ENCODE measurements at regions of chr6 and their contacts with region 1.

Region 1: GRCh38 chr6:113970805-113971676 is at the start of gene HDAC2:
- DNase-seq: peak; percentile 61 to 92 (median 84)
- ATAC-seq: peak; percentile 77
- H3K4me3 ChIP-seq: peak within 1 kb of the TSS; percentile 72 to 99
- H3K4me3 Mint-ChIP-seq: peak within 1 kb of the TSS; percentile 95
- H3K27ac ChIP-seq: peak within 1 kb of the TSS; percentile 78 to 93
- H3K27ac Mint-ChIP-seq: peak within 1 kb of the TSS; percentile 97
- H3K4me1 ChIP-seq: peaks cover 30% of the 10 kb centered on the region
- H3K4me1 Mint-ChIP-seq: peaks cover 42% of the 10 kb centered on the region
- H3K27me3 ChIP-seq: no peaks in the 10 kb centered on the region
- H3K27me3 Mint-ChIP-seq: no peaks in the 10 kb centered on the region
- CTCF ChIP-seq: no peak
- total RNA-seq, gene HDAC2: 34.6 to 35.0 TPM

Region 2: DNA sequence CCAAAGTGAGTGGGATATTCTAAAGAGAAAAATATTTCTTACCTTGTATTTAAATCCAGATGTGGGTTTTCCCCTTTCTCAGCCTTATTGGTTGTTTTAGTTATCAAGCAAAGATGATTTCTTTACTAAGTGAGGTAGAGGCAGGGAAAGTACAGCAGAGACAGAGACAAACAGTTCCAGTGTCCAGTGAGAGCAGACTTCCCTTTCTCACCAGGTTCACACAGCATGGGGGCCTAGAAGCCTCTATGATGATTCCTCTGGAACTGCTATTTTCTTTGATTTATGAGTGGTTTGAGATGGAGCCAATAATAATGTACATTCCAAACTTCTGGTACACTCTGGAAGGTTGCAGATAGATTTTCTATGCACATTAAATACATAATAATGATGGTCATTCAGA is 347.9 kb before region 1 on chr6:
- CTCF ChIA-PET with region 1: no interaction called
- POLR2A ChIA-PET with region 1: no interaction called
- intact Hi-C with region 1: no loop called
- DNase-seq: no peak
- ATAC-seq: no peak
- H3K4me3 ChIP-seq: no peak overlapping the region
- H3K4me3 Mint-ChIP-seq: no peak overlapping the region
- H3K27ac ChIP-seq: no peak overlapping the region
- H3K27ac Mint-ChIP-seq: no peak overlapping the region
- H3K4me1 ChIP-seq: no peaks in the 10 kb centered on the region
- H3K4me1 Mint-ChIP-seq: no peaks in the 10 kb centered on the region
- H3K27me3 ChIP-seq: no peaks in the 10 kb centered on the region
- H3K27me3 Mint-ChIP-seq: peaks cover 2% of the 10 kb centered on the region
- CTCF ChIP-seq: no peak

Region 3: GRCh38 chr6:113719056-113719455 is 252.0 kb before region 1 on chr6:
- CTCF ChIA-PET with region 1: no interaction called
- POLR2A ChIA-PET with region 1: no interaction called
- intact Hi-C with region 1: no loop called
- DNase-seq: no peak
- ATAC-seq: no peak
- H3K4me3 ChIP-seq: no peak overlapping the region
- H3K4me3 Mint-ChIP-seq: no peak overlapping the region
- H3K27ac ChIP-seq: no peak overlapping the region
- H3K27ac Mint-ChIP-seq: no peak overlapping the region
- H3K4me1 ChIP-seq: no peaks in the 10 kb centered on the region
- H3K4me1 Mint-ChIP-seq: no peaks in the 10 kb centered on the region
- H3K27me3 ChIP-seq: no peaks in the 10 kb centered on the region
- H3K27me3 Mint-ChIP-seq: peaks cover 10% of the 10 kb centered on the region
- CTCF ChIP-seq: no peak

Region 4: DNA sequence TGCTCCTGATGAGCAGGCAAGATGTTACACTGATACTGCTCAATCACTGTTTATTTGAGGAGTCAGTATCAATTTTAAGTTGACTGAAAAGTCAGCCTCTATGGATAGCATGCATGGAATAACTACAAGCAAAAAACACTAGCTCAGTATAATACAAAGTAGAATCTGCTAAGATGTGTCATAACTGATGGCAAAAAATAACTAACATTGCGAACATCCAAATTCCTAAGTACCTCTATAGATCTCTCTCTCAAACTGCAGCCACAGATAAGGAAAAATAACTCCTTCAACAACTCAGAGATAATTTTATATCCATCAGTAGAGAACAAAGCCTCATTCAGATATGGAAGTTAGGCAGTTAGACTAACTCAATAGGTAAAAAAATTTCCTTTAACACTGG is 16.4 kb before region 1 on chr6:
- CTCF ChIA-PET with region 1: interaction called, 4 read pairs
- POLR2A ChIA-PET with region 1: interaction called, 6 read pairs
- intact Hi-C with region 1: loop called in 1 of 2 experiments (anchors 2 kb)
- DNase-seq: no peak
- ATAC-seq: no peak
- H3K4me3 ChIP-seq: no peak overlapping the region
- H3K4me3 Mint-ChIP-seq: no peak overlapping the region
- H3K27ac ChIP-seq: no peak overlapping the region
- H3K27ac Mint-ChIP-seq: no peak overlapping the region
- H3K4me1 ChIP-seq: no peaks in the 10 kb centered on the region
- H3K4me1 Mint-ChIP-seq: peaks cover 14% of the 10 kb centered on the region
- H3K27me3 ChIP-seq: no peaks in the 10 kb centered on the region
- H3K27me3 Mint-ChIP-seq: no peaks in the 10 kb centered on the region
- CTCF ChIP-seq: no peak

Region 5: DNA sequence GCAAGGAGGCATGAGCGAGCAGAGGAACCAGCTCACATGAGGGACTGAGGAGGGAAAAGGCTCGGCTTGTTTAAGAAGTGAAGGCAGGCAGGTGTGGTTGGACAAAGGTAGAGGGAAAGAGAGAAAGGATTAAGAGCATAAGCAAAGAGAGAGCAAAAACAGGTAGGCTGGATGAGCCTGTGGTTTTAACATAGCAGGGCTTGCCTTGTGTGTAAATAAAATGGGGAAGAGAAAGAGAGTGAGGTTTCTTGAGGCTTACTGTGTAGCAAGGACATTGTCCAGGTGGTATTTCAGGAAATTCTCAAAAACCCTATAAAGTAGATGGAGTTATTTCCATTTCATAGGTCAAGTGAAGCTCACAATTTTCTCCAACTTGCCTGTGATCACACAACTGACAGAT is 93.8 kb after region 1 on chr6:
- CTCF ChIA-PET with region 1: no interaction called
- POLR2A ChIA-PET with region 1: no interaction called
- intact Hi-C with region 1: no loop called
- DNase-seq: no peak
- ATAC-seq: no peak
- H3K4me3 ChIP-seq: no peak overlapping the region
- H3K4me3 Mint-ChIP-seq: no peak overlapping the region
- H3K27ac ChIP-seq: no peak overlapping the region
- H3K27ac Mint-ChIP-seq: no peak overlapping the region
- H3K4me1 ChIP-seq: no peaks in the 10 kb centered on the region
- H3K4me1 Mint-ChIP-seq: no peaks in the 10 kb centered on the region
- H3K27me3 ChIP-seq: no peaks in the 10 kb centered on the region
- H3K27me3 Mint-ChIP-seq: peaks cover 11% of the 10 kb centered on the region
- CTCF ChIP-seq: no peak

Measured in CD8-positive, alpha-beta T cell (primary cell).